Mammary epithelial cell (primary cell): ENCODE measurements at regions of chr7 and their contacts with region 1.

Region 1: DNA sequence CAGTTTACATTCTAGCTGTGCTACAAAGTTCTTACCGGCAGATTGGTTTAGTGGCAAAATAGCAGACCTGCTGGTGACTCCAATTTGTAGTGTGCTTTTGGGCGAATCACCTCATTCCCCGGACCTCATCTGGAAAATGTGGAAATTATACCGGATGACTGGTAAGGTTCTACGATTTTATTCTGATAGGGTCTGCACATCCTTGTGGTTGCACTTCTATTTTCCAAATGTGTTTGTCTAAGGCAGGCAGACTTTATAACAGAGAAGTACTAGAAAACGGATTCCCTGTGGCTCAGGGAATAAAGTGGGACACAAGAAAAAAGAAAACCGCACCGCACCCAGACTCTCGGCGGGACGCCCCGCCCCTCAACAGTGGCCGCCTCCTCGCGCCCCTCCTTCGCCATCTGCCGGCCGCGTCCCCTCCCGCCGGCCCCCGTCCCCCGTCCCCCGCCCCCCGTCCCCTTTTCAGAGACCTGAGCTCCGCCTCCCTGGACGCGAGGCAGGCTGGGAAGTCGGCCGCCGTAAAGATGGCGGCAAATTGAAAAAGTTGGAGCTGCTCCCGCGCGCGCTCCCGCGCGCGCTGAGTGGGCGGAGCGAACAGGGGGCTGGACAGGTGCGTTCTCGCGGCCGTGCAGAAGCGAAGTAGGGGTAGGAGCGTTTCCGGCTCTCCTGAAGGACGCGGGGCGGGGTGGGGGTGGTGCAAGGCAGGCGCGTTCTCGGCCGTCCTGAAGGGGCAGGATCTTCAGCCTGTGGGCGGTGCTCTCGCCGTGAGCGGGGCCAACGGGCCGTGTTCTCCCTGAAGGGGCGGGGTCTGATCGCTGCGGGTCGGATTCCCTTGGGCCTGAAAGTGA is 531 bp upstream of the CCM2 start:
- DNase-seq: peak; percentile 99
- H3K4me3 ChIP-seq: peak overlapping the region; percentile 49 to 83 (median 70)
- H3K27ac ChIP-seq: peak overlapping the region; percentile 77
- H3K4me1 ChIP-seq: peaks cover 23% of the 10 kb centered on the region
- H3K27me3 ChIP-seq: no peaks in the 10 kb centered on the region
- CTCF ChIP-seq: no peak

Region 2: DNA sequence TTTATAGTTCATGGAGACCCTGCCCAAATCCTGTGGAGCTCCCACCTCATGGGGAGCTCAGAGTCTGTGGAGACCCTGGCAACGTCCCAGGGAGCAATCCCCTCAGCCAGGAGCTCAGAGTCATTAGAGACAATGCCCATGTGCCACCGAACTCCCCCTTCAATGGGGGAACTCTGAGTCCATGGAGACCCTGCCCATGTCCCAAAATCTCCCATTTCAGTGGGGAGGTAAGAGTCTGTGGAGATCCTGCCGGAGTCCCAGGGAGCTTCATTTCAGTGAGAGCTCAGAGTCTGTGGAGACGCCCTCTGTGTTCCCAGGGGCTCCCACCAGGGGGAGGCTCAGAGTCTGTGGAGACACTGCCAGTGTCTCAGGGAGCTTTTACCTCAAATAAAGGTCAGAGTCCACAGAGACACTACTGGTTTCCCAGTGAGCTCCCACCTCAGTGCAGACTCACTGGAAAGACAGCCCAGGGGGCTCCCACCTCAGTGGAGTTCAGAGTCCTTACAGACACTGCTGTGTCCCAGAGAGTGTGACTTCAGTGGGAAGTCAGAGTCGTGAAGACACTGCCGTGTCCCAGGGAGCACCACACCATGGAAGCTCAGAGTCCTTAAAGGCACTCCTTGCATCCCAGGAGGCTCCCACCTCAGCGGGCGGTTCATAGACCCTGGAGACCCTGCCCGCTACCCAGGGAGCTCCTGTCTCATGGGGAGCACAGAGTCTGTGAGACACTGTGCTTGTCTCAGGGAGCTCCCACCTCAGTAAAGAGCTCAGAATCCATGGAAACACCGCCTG is 25.7 kb before region 1 on chr7:
- CTCF ChIA-PET with region 1: interaction called, 22 read pairs
- dilution Hi-C with region 1: no loop called
- in situ Hi-C with region 1: no loop called
- intact Hi-C with region 1: no loop called
- DNase-seq: no peak
- H3K4me3 ChIP-seq: no peak overlapping the region
- H3K27ac ChIP-seq: no peak overlapping the region
- H3K4me1 ChIP-seq: no peaks in the 10 kb centered on the region
- H3K27me3 ChIP-seq: no peaks in the 10 kb centered on the region
- CTCF ChIP-seq: peak; percentile 56 to 65

Region 3: DNA sequence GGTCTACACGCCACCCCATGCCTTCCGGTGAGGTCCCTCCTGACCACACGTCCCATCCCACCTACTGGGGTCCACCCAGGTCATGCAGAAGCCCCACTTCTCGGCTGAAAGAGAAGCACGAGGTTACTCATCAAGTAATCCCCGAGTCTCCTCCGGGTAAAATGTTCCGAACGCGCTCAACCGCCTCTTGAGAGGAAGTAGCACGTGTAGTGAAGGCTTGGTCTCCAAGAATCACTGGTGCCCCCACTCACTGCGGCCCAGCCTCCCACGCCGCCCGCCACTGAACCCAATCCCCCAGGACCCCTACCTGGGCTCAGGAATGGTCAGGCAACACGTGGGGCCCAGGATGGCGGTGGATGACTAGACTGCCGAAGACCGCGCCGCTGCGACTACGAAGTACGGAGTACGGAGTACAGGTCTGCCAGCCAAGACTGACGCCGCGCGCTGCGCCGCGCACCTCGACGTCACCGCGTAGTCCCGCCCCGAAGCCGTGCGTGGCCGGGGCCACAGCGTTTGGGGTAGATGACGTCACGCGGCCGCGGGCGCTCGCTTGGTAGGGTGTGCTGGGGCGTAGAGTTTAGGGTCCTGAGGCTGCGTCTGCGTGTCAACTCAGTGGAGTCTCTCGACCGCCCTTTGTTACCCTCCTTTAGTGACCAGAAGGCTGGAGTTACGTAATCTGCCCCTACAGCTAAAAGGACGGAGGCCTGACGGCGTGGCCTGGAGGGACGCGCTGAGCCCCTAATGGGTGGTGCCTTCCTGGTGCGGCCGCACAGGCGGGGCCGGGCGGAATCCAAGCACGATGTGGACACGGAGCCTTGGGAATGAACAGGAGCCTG is 13.0 kb before region 1 on chr7:
- CTCF ChIA-PET with region 1: no interaction called
- dilution Hi-C with region 1: no loop called
- in situ Hi-C with region 1: no loop called
- intact Hi-C with region 1: loop called (anchors 1 kb)
- DNase-seq: peak; percentile 91
- H3K4me3 ChIP-seq: peak overlapping the region; percentile 76 to 91 (median 84)
- H3K27ac ChIP-seq: peak overlapping the region; percentile 90
- H3K4me1 ChIP-seq: peaks cover 32% of the 10 kb centered on the region
- H3K27me3 ChIP-seq: no peaks in the 10 kb centered on the region
- CTCF ChIP-seq: no peak

Region 4: GRCh38 chr7:45033261-45033930 is 33.9 kb after region 1 on chr7:
- CTCF ChIA-PET with region 1: no interaction called
- dilution Hi-C with region 1: loop called (anchors 5 kb)
- in situ Hi-C with region 1: no loop called
- intact Hi-C with region 1: no loop called
- DNase-seq: peak; percentile 80
- H3K4me3 ChIP-seq: no peak overlapping the region
- H3K27ac ChIP-seq: peak overlapping the region; percentile 65
- H3K4me1 ChIP-seq: peaks cover 33% of the 10 kb centered on the region
- H3K27me3 ChIP-seq: no peaks in the 10 kb centered on the region
- CTCF ChIP-seq: no peak

Region 5: DNA sequence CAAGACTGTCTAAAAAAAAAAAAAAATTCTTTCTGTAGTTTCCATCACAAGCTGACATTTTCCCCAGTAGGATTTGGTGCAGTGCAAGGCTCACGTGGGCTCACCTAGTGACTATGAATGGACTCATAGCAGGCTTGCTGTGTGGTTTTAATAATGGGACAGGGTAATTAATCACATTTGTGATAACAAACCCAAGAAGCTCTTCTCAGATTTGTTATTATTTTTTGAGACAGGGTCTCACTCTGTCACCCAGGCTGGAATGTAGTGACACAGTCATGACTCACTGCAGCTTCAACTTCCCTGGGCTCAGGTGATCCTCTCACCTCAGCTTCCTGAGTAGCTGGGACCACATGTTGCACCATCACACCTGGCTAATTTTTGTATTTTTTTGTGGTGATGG is 49.3 kb after region 1 on chr7:
- CTCF ChIA-PET with region 1: no interaction called
- dilution Hi-C with region 1: no loop called
- in situ Hi-C with region 1: no loop called
- intact Hi-C with region 1: loop called (anchors 5 kb)
- DNase-seq: peak; percentile 78
- H3K4me3 ChIP-seq: no peak overlapping the region
- H3K27ac ChIP-seq: peak overlapping the region; percentile 10
- H3K4me1 ChIP-seq: peaks cover 15% of the 10 kb centered on the region
- H3K27me3 ChIP-seq: no peaks in the 10 kb centered on the region
- CTCF ChIP-seq: no peak

Region 6: GRCh38 chr7:45073786-45074527 is 74.5 kb after region 1 on chr7:
- CTCF ChIA-PET with region 1: no interaction called
- dilution Hi-C with region 1: loop called (anchors 5 kb)
- in situ Hi-C with region 1: no loop called
- intact Hi-C with region 1: no loop called
- DNase-seq: no peak
- H3K4me3 ChIP-seq: no peak overlapping the region
- H3K27ac ChIP-seq: no peak overlapping the region
- H3K4me1 ChIP-seq: peaks cover 12% of the 10 kb centered on the region
- H3K27me3 ChIP-seq: no peaks in the 10 kb centered on the region
- CTCF ChIP-seq: no peak